ENCODE measurements at regions of chr1 and their contacts with region 1.

Region 1: GRCh38 chr1:6842301-6842700 is 57.0 kb downstream of the CAMTA1 start:
- DNase-seq: no peak
- ATAC-seq: no peak

Region 2: GRCh38 chr1:7795406-7795805 is 953.1 kb after region 1 on chr1:
- intact Hi-C with region 1: loop called (anchors 10 kb)
- DNase-seq: no peak
- ATAC-seq: no peak

Measured in sciatic nerve (tissue), 2 donors.